ENCODE measurements at regions of chr6 and their contacts with region 1.

Region 1: GRCh38 chr6:14635934-14636591 is 518.5 kb downstream of the CD83 start:
- DNase-seq: peak in 4 of 5 donors; percentile 24 to 58 (median 48)
- H3K4me3 ChIP-seq: peak overlapping the region; percentile 30 to 36
- H3K4me3 Mint-ChIP-seq: peak overlapping the region; percentile 46 to 89 (median 80)
- H3K27ac ChIP-seq: no peak overlapping the region
- H3K27ac Mint-ChIP-seq: peak overlapping the region; percentile 75 to 96 (median 89)
- H3K4me1 ChIP-seq: peaks cover 48% of the 10 kb centered on the region
- H3K4me1 Mint-ChIP-seq: peaks cover 37 to 51% (median 44%) of the 10 kb centered on the region in 4 donors
- H3K27me3 ChIP-seq: no peaks in the 10 kb centered on the region
- H3K27me3 Mint-ChIP-seq: peaks cover 0 to 3% of the 10 kb centered on the region in 2 donors

Region 2: DNA sequence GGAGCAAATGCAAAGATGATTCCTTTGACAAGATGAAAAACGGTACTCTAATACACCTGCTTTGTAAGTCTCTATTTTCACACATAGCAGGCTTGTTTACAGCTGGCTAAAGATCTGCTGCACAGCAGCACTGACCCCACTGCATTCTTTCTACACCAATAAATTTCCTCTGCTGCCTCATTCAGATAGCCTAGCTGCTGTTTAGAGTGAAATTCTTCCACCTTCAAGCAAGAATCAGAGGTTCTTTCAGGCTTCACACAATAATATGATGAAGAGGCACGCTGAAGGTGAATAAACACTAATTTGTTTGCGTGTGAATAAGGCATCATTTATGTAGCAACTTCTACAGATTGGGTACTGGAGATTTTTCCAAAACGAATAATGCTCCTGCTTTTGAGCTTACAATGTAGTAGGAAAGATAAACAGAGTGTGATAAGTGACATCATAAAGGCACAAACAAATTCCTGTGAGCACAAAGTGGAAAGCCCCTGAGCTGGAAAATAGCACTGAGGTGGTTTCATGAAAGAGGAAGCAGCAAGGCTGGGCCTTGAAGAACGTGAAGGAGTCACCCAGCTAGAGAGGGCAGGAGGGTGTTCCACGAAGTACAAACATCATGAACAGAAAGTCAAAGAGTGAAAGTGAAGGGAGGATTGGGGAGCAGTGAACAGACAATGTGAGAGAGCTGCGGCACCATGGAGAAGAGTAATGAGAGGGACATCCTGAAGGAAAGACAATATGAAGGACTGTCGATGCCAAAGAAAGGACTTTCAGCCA is 24.9 kb after region 1 on chr6:
- CTCF ChIA-PET with region 1: interaction called, 4 read pairs
- POLR2A ChIA-PET with region 1: interaction called, 21 read pairs
- intact Hi-C with region 1: loop called (anchors 2 kb)
- DNase-seq: peak; percentile 32 to 73 (median 43)
- H3K4me3 ChIP-seq: no peak overlapping the region
- H3K4me3 Mint-ChIP-seq: no peak overlapping the region
- H3K27ac ChIP-seq: no peak overlapping the region
- H3K27ac Mint-ChIP-seq: no peak overlapping the region
- H3K4me1 ChIP-seq: peaks cover 63% of the 10 kb centered on the region
- H3K4me1 Mint-ChIP-seq: peaks cover 25 to 32% (median 28%) of the 10 kb centered on the region in 4 donors
- H3K27me3 ChIP-seq: no peaks in the 10 kb centered on the region
- H3K27me3 Mint-ChIP-seq: no peaks in the 10 kb centered on the region

Region 3: GRCh38 chr6:14665827-14666724 is 30.0 kb after region 1 on chr6:
- CTCF ChIA-PET with region 1: interaction called, 4 read pairs
- POLR2A ChIA-PET with region 1: interaction called, 21 read pairs
- intact Hi-C with region 1: loop called (anchors 2 kb)
- DNase-seq: no peak
- H3K4me3 ChIP-seq: no peak overlapping the region
- H3K4me3 Mint-ChIP-seq: no peak overlapping the region
- H3K27ac ChIP-seq: no peak overlapping the region
- H3K27ac Mint-ChIP-seq: peak overlapping the region in 2 of 7 donors; percentile 30 to 31
- H3K4me1 ChIP-seq: peaks cover 36% of the 10 kb centered on the region
- H3K4me1 Mint-ChIP-seq: peaks cover 14 to 25% (median 16%) of the 10 kb centered on the region in 4 donors
- H3K27me3 ChIP-seq: no peaks in the 10 kb centered on the region
- H3K27me3 Mint-ChIP-seq: no peaks in the 10 kb centered on the region

Region 4: GRCh38 chr6:14711056-14711703 is 75.1 kb after region 1 on chr6:
- CTCF ChIA-PET with region 1: no interaction called
- POLR2A ChIA-PET with region 1: no interaction called
- intact Hi-C with region 1: no loop called
- DNase-seq: peak in 4 of 5 donors; percentile 30 to 54 (median 40)
- H3K4me3 ChIP-seq: no peak overlapping the region
- H3K4me3 Mint-ChIP-seq: no peak overlapping the region
- H3K27ac ChIP-seq: no peak overlapping the region
- H3K27ac Mint-ChIP-seq: peak overlapping the region in 3 of 7 donors; percentile 4 to 86 (median 57)
- H3K4me1 ChIP-seq: peaks cover 12% of the 10 kb centered on the region
- H3K4me1 Mint-ChIP-seq: peaks cover 4 to 19% (median 9%) of the 10 kb centered on the region in 4 donors
- H3K27me3 ChIP-seq: no peaks in the 10 kb centered on the region
- H3K27me3 Mint-ChIP-seq: peaks cover 0 to 2% of the 10 kb centered on the region in 2 donors

Region 5: GRCh38 chr6:14799928-14800327 is 163.9 kb after region 1 on chr6:
- CTCF ChIA-PET with region 1: no interaction called
- POLR2A ChIA-PET with region 1: no interaction called
- intact Hi-C with region 1: no loop called
- DNase-seq: peak in 4 of 5 donors; percentile 8 to 24 (median 22)
- H3K4me3 ChIP-seq: no peak overlapping the region
- H3K4me3 Mint-ChIP-seq: no peak overlapping the region
- H3K27ac ChIP-seq: no peak overlapping the region
- H3K27ac Mint-ChIP-seq: no peak overlapping the region
- H3K4me1 ChIP-seq: no peaks in the 10 kb centered on the region
- H3K4me1 Mint-ChIP-seq: peaks cover 0 to 4% (median 2%) of the 10 kb centered on the region in 4 donors
- H3K27me3 ChIP-seq: no peaks in the 10 kb centered on the region
- H3K27me3 Mint-ChIP-seq: peaks cover 1 to 5% of the 10 kb centered on the region in 2 donors

Measured in CD4-positive, alpha-beta memory T cell (primary cell).